ENCODE measurements at regions of chr5 and their contacts with region 1.

Region 1: GRCh38 chr5:147188200-147189108 is 46.4 kb upstream of the STK32A start:
- DNase-seq: peak; percentile 36
- CTCF ChIP-seq: peak; percentile 73

Region 2: DNA sequence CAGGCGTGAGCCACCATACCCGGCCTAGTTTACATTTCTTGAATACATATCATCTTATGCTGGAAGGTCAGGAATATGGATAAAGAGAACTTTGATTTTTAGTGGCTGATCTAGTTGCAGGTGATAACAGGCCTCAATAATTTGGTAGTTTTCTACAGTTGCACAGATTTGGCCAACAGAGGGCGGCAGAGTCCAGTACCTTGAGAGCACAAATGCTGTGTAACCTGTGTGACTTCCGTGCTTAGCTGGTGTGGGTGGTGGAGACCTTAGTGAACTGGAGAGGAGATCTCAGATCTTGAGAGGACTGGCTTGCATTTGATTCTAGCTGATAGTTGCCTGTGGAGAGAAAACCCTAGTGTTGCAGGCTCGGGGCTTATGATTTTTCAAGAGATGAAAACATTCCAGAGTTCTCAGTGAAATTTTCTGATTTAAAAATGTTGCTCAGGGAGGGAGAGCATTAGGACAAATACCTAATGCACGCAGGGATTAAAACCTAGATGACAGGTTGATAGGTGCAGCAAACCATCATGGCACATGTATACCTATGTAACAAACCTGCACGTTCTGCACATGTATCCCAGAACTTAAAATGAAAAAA is 655.1 kb before region 1 on chr5:
- in situ Hi-C with region 1: loop called (anchors 25 kb)
- DNase-seq: peak; percentile 70
- CTCF ChIP-seq: peak; percentile 77

Region 3: DNA sequence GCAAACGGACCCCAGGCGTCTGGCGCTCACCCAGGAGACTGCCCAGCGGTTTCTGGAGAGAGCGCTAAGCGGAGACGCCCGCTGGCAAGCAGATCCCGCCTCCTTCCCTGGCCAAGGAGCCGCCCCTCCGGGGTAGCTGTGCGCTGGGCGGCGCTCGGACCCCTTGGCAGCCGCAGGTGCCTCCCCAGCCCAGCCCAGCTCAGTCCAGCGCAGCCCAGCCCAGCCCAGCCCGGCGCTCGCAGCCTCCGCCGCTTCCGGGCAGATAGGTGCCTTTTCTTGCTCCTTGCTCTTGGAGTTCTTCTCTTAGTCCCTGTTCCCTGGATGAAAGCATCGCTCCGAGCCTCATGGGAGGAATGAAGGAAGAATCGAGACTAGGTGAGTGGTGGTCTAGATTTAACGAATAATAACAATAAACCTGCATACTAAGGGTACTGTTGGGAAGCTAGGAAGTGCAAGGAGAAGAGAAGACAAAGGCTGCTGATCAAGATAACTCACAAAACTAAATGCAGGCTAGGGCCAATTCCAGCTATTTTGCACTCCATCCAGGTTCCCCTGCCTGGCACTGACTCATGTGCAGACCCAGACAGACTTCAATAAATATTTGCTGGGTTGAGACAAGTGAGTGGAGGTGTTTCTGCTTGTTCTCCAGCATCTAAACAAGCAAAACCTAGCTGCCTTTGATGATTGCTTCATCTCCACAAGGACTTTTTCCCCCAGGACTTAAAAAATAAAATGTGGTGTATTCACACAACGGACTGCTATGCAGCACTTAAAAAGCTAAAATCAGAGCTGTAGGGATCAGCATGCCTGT is 46.6 kb after region 1 on chr5 and contains the start of gene STK32A:
- in situ Hi-C with region 1: no loop called
- DNase-seq: no peak
- CTCF ChIP-seq: no peak

Region 4: GRCh38 chr5:147259837-147260236 is 71.4 kb after region 1 on chr5:
- in situ Hi-C with region 1: no loop called
- DNase-seq: no peak
- CTCF ChIP-seq: no peak

Measured in GM13976 (cell line).